ENCODE measurements at regions of chr10 and their contacts with region 1.

Region 1: DNA sequence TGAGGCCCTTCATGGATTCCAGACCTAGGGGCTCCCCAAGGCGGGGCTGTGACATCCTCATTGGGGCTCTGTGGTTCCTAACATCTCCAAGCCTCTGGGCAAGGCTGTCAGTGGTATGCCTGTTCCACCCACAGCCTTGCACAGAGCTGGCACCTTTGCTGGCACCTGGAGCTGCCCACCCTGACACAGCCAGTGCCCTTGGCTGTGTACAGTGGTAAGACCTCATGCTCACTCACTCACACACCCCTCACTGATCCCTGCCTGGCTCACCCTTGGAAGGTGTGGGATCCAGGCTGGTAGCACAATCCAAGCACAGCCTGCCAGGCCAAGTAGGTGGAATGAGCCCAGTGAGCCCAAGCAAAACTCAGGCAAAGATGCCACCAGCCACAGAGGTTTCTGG is 200.4 kb upstream of the PCDH15 start:
- DNase-seq: no peak
- ATAC-seq: no peak
- H3K4me3 ChIP-seq: no peak overlapping the region
- H3K27ac ChIP-seq: no peak overlapping the region
- H3K4me1 ChIP-seq: no peaks in the 10 kb centered on the region
- H3K27me3 ChIP-seq: no peaks in the 10 kb centered on the region
- CTCF ChIP-seq: no peak

Region 2: DNA sequence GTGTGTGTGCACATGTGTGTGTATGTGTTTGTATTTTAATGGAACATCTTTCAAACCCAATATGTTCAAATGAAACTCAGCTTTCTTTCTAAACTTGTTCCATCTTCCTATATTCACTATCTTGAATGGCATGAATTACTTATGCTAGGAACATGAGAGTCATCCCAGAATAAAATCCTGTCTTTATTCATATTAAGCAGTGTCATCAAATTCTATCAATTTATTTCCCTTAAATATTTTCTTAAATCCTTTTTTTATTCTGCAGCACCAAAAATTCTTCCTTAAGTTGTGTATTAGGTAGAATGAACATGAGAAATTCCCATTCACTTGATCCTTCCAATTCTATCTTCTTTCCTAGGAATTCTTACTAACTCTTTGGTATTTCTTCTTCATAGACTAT is 53.8 kb before region 1 on chr10:
- CTCF ChIA-PET with region 1: no interaction called
- POLR2A ChIA-PET with region 1: no interaction called
- intact Hi-C with region 1: loop called (anchors 5 kb)
- DNase-seq: no peak
- ATAC-seq: no peak
- H3K4me3 ChIP-seq: no peak overlapping the region
- H3K27ac ChIP-seq: no peak overlapping the region
- H3K4me1 ChIP-seq: no peaks in the 10 kb centered on the region
- H3K27me3 ChIP-seq: no peaks in the 10 kb centered on the region
- CTCF ChIP-seq: no peak

Measured in PC-3 (cell line).